ENCODE measurements at regions of chr15 and their contacts with region 1.

Region 1: DNA sequence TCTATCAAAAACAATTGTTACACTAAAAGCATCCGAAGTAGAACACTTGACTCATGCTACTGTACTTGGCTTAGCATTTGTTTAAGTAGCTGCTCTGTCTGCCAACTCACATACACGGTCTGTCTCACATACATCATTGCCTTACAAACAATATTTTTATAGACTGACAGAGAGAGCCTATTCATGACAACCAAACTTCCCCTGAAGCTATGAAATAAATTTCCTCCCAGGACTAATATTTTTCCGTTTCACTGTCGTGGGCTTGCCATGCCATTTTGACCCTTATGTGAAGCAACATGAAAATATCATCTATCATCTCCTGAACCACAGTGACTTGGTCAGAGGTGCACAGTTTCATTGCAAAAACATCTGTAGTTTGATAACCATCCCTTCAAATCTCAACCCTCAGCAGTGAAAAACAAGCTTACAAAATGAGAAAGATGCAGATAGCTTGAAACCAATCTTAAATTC is 66.5 kb upstream of the PYGO1 start:
- DNase-seq: no peak
- ATAC-seq: no peak

Region 2: DNA sequence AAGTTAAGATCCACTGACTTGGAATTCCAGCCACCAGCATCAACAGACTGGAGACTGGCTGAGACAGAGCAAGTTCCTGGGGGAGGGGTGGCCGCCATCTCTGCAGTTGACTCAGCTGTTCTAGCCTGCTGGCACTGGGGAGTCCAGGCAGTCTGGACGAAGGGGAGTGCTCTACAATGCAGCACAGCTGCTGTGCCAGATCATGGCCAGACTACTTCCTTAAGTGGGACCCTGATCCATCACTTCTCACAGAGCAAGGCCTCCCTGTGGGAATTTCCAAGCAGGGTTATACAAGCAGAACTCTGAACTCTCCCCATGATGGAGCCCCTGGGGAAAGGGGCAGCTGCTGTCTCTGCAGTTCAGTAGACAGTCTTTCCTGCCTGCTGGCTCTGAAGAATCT is 101.7 kb before region 1 on chr15:
- intact Hi-C with region 1: no loop called
- DNase-seq: peak; percentile 49
- ATAC-seq: peak; percentile 90

Region 3: DNA sequence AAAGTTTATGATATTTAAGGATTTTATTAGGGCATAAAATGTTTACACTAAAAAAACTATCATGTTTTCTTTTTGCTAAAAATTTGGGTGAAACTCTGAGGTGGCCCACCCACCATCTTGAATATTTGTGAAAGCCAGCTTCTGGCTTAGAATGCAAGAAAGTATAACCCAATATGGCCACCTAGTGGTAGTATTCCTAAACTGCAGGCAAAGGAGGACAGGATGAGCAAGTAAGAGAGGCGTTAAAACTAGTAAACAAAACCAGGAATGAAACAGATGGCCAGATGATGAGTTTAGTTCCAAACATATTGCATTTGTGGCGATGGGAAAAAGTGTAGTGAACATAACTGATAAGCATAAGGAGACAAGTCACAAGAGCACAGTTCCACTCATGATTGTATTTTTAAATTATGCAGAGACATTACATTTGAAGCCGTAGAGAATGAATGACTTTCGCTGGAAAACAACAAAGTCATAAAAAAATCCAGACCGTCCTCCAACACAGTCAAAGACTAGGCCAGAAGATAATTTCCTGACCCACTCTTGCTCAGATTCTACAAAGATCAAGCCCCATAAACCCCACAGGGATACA is 191.6 kb after region 1 on chr15:
- intact Hi-C with region 1: loop called (anchors 10 kb)
- DNase-seq: no peak
- ATAC-seq: peak; percentile 64

Measured in left ventricle myocardium superior (tissue), 1 donor.